ENCODE measurements at regions of chr1 and their contacts with region 1.

Region 1: GRCh38 chr1:48471691-48472576 is at the start of gene SPATA6:
- DNase-seq: peak; percentile 88 to 97 (median 94)
- ATAC-seq: peak; percentile 94
- H3K4me3 ChIP-seq: peak within 1 kb of the TSS; percentile 69
- H3K4me3 Mint-ChIP-seq: peak within 1 kb of the TSS; percentile 94
- H3K27ac ChIP-seq: peak within 1 kb of the TSS; percentile 31 to 46
- H3K27ac Mint-ChIP-seq: peak within 1 kb of the TSS; percentile 57
- H3K4me1 ChIP-seq: peaks cover 22% of the 10 kb centered on the region
- H3K4me1 Mint-ChIP-seq: peaks cover 45% of the 10 kb centered on the region
- H3K27me3 ChIP-seq: peaks cover 0 to 4% of the 10 kb centered on the region in 2 experiments
- H3K27me3 Mint-ChIP-seq: no peaks in the 10 kb centered on the region
- CTCF ChIP-seq: no peak
- total RNA-seq, gene SPATA6: 3.2 to 4.1 TPM

Region 2: DNA sequence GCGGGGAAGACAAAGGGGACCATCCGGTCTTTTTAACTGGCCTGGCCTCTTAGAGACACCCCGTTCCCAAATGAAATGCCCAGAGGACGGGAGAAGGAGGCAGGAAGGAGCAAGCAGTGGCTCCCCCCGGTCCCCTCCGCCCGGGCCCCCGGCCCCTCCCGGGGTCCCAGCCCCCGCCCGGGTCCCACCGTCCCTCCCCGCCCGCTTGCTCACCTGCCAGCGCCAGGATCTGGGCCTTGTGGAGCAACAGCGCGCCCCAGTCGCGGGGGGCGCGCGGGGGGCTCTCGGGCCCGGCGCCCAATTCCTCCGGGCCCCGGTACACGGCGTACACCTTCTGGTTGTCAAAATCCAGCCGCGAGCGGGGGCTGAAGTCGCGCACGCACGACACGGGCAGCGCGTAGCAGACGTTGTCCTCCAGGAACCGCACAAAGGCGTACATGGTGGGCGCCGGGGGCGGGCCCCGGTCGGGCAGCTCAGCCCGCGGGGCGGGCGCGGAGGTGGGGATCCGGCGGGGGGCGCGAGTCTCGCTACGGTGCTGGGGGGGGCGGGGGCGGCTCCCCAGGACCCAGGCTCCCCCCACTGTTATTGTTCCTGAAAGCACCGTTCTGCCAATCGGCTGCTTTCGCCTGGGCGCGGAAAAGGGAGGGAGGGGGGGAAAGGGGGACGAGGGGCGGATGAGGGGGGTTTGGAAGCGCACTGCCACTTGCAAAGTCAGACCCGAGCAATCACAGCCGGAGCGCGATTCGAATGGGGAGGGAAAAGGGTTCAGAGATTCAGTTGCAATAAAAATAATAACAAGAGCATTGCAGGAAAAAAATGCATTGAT is 304.7 kb after region 1 on chr1 and contains the start of gene BEND5:
- CTCF ChIA-PET with region 1: no interaction called
- POLR2A ChIA-PET with region 1: no interaction called
- intact Hi-C with region 1: loop called in 1 of 2 experiments (anchors 5 kb)
- DNase-seq: peak; percentile 25 to 75 (median 58)
- ATAC-seq: peak; percentile 84
- H3K4me3 ChIP-seq: peak within 1 kb of the TSS; percentile 57
- H3K4me3 Mint-ChIP-seq: peak within 1 kb of the TSS; percentile 96
- H3K27ac ChIP-seq: peak within 1 kb of the TSS in 1 of 2 donors; percentile 39
- H3K27ac Mint-ChIP-seq: peak within 1 kb of the TSS; percentile 84
- H3K4me1 ChIP-seq: peaks cover 11% of the 10 kb centered on the region
- H3K4me1 Mint-ChIP-seq: peaks cover 52% of the 10 kb centered on the region
- H3K27me3 ChIP-seq: peaks cover 0 to 6% of the 10 kb centered on the region in 2 experiments
- H3K27me3 Mint-ChIP-seq: peaks cover 5% of the 10 kb centered on the region
- CTCF ChIP-seq: no peak
- total RNA-seq, gene BEND5: 5.6 to 5.7 TPM